MCF 10A (cell line): ENCODE measurements at regions of chr9 and their contacts with region 1.

Region 1: DNA sequence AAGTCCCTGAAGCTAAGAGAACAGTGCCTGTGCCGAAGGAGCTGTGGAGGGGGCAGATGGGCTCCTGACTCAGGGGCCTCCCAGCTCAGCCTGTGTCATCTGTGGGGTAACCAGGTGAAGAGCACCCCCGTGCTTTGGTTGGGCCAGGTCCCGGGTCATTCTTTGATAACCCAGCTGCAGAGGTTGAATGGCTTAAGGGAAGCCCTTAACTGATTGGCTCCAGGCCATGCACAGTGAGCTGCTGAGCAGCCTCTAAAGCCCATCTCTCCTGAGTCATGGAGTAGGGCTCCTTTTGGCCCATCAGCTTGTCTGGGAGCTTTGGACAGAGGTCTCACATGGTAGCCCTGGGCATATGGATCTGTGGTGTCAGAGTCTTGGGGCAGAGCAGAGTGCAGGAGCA is 28.7 kb downstream of the COL27A1 start:
- DNase-seq: no peak
- H3K4me3 Mint-ChIP-seq: no peak overlapping the region
- H3K27ac Mint-ChIP-seq: no peak overlapping the region
- H3K4me1 Mint-ChIP-seq: no peaks in the 10 kb centered on the region
- H3K27me3 Mint-ChIP-seq: peaks cover 12% of the 10 kb centered on the region
- CTCF ChIP-seq: no peak

Region 2: GRCh38 chr9:114214686-114215414 is 30.8 kb after region 1 on chr9:
- CTCF ChIA-PET with region 1: no interaction called
- POLR2A ChIA-PET with region 1: no interaction called
- intact Hi-C with region 1: loop called (anchors 1 kb)
- DNase-seq: peak; percentile 8
- H3K4me3 Mint-ChIP-seq: no peak overlapping the region
- H3K27ac Mint-ChIP-seq: no peak overlapping the region
- H3K4me1 Mint-ChIP-seq: no peaks in the 10 kb centered on the region
- H3K27me3 Mint-ChIP-seq: no peaks in the 10 kb centered on the region
- CTCF ChIP-seq: no peak